Mammary epithelial cell (primary cell): ENCODE measurements at regions of chr17 and their contacts with region 1.

Region 1: DNA sequence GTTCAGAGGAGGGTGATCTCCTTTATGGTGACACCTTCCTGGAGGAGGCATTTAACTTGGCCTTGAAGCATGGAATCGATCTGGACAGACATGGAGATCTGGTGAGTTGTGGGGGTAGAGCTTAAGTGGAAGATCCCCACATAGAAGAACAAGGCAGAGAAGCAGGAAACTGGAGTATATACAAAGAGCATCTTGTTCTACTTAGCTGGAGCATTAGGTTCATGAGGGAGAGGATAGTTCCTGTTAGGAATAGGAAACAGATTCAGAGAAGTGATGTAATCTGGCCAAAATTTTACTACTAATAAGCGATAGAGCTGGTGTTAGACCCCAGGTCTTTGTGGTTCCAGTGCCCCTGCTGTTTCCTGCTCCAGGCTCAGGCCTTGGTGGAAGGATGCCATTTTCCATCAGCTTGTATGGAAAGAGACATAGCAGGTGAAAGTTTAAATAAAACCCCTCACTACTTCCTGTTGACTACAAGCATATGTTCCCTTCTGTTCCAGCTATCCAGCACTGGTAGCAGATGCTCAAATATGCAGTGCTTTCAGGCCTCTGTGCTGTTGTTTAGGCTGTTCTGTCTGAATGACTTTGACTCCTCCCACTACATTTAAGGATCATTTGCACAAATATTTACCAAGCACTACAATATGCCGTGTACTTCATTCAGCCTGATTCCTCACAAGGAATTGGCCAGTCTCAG is 9.4 kb downstream of the RPAIN start:
- DNase-seq: no peak
- H3K4me3 ChIP-seq: no peak overlapping the region
- H3K27ac ChIP-seq: no peak overlapping the region
- H3K4me1 ChIP-seq: peaks cover 16% of the 10 kb centered on the region
- H3K27me3 ChIP-seq: no peaks in the 10 kb centered on the region
- CTCF ChIP-seq: no peak

Region 2: GRCh38 chr17:4161179-4161559 is 1268.2 kb before region 1 on chr17:
- CTCF ChIA-PET with region 1: no interaction called
- dilution Hi-C with region 1: no loop called
- in situ Hi-C with region 1: no loop called
- intact Hi-C with region 1: no loop called
- DNase-seq: peak; percentile 90
- H3K4me3 ChIP-seq: no peak overlapping the region
- H3K27ac ChIP-seq: peak overlapping the region; percentile 68
- H3K4me1 ChIP-seq: peaks cover 37% of the 10 kb centered on the region
- H3K27me3 ChIP-seq: no peaks in the 10 kb centered on the region
- CTCF ChIP-seq: peak; percentile 29 to 57

Region 3: DNA sequence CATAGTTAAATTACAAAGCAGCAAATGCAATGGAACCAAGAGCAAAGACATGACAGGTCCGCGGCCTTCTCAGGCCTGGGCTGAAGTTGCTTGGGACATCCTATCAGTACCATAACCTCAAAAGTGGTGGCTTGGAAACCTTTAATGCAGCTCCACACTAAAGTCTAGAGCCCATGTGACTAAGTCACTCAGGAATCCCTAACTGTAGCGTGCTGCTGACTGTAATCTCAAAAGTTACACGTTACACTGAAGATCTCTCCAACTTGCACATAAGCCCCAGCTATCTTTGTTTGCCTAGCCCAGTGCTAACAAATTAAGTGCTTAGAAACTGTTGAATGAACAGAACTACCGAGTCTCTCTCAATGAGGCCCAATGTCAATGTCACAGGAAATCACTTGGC is 37.7 kb before region 1 on chr17:
- CTCF ChIA-PET with region 1: no interaction called
- dilution Hi-C with region 1: no loop called
- in situ Hi-C with region 1: no loop called
- intact Hi-C with region 1: no loop called
- DNase-seq: no peak
- H3K4me3 ChIP-seq: no peak overlapping the region
- H3K27ac ChIP-seq: no peak overlapping the region
- H3K4me1 ChIP-seq: no peaks in the 10 kb centered on the region
- H3K27me3 ChIP-seq: no peaks in the 10 kb centered on the region
- CTCF ChIP-seq: no peak

Region 4: GRCh38 chr17:5516060-5516792 is 86.9 kb after region 1 on chr17:
- CTCF ChIA-PET with region 1: no interaction called
- dilution Hi-C with region 1: loop called (anchors 5 kb)
- in situ Hi-C with region 1: no loop called
- intact Hi-C with region 1: no loop called
- DNase-seq: peak; percentile 90
- H3K4me3 ChIP-seq: no peak overlapping the region
- H3K27ac ChIP-seq: peak overlapping the region; percentile 33
- H3K4me1 ChIP-seq: peaks cover 17% of the 10 kb centered on the region
- H3K27me3 ChIP-seq: no peaks in the 10 kb centered on the region
- CTCF ChIP-seq: no peak

Region 5: DNA sequence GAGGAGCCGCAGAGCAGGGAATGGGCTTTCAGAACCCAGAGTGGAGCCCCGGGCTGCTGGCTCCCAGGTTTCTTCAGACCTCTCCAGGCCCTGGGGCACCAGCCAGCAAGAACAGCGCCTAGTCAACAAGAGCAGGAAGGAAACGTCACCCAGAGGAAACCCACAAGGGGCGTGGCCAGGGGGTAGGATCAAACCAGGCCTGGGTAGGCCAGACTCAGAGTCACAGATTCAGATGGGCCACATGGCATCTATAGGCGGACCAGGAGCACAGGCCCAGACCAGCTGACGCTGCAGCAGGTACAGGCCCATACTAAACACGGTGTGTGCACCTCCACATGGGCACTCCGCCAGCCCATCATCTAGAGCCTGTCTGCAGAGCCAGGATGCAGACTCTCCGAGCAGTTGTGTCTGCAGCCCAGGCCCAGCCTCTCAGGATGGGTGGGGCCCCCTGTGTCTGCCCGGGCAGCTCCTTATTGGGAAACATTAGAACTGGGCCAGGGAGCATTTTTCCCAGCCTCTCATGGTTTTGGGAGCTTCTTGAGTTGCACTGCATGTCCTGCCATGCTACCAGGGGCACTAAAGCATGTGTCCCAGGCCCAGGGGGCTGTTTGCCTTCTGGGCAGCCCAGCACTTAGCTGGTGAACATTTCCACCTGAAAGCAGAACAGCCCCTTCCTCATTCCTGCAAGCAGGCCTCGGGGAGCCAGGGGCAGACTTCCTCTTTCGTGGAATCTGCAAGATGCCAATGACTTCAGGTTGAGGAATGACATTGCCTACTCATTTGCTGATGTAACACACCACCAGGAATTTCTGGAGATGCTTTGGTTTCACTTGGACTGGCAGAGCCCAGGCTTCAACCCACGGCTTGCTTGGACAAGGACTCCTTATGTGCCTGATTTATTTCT is 155.3 kb after region 1 on chr17 and contains the start of gene NLRP1:
- CTCF ChIA-PET with region 1: no interaction called
- dilution Hi-C with region 1: no loop called
- in situ Hi-C with region 1: no loop called
- intact Hi-C with region 1: no loop called
- DNase-seq: peak; percentile 99
- H3K4me3 ChIP-seq: peak within 1 kb of the TSS; percentile 15 to 32 (median 31)
- H3K27ac ChIP-seq: peak within 1 kb of the TSS; percentile 84
- H3K4me1 ChIP-seq: peaks cover 41% of the 10 kb centered on the region
- H3K27me3 ChIP-seq: no peaks in the 10 kb centered on the region
- CTCF ChIP-seq: no peak
- total RNA-seq, gene NLRP1: 27.3 to 48.3 TPM